Heart left ventricle (tissue), 16 donors: ENCODE measurements at regions of chr6 and their contacts with region 1.

Region 1: GRCh38 chr6:53199156-53199555 is 50.5 kb upstream of the GCM1 start:
- DNase-seq: no peak
- ATAC-seq: no peak
- H3K4me3 ChIP-seq: no peak overlapping the region
- H3K27ac ChIP-seq: no peak overlapping the region
- H3K4me1 ChIP-seq: no peaks in the 10 kb centered on the region
- H3K27me3 ChIP-seq: no peaks in the 10 kb centered on the region
- CTCF ChIP-seq: no peak
- POLR2A ChIP-seq: no peak

Region 2: DNA sequence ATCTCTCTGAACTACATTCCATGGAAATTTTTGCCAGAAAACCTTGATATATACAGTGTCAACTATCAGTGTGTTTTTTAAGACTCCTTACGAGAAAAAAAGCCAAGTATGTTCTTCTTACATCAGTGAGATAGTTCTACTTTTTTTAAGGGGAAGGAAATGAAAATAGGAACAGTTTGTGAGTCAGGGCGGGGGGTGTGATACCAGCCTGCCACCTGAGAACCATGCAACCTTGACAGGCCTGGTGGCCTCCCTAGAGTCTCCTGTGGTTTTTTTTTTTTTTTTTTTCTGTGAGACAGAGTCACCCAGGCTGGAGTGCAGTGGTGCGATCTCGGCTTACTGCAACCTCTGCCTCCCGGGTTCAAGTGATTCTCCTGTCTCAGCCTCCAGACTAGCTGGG is 45.8 kb after region 1 on chr6:
- intact Hi-C with region 1: loop called in 1 of 10 experiments (anchors 5 kb)
- DNase-seq: no peak
- ATAC-seq: peak in 3 of 4 donors; percentile 20 to 66 (median 34)
- H3K4me3 ChIP-seq: no peak overlapping the region
- H3K27ac ChIP-seq: peak overlapping the region in 1 of 12 donors; percentile 71
- H3K4me1 ChIP-seq: peaks cover 0 to 23% (median 0%) of the 10 kb centered on the region in 12 donors
- H3K27me3 ChIP-seq: no peaks in the 10 kb centered on the region
- CTCF ChIP-seq: no peak
- POLR2A ChIP-seq: no peak

Region 3: GRCh38 chr6:53326372-53327016 is 127.3 kb after region 1 on chr6:
- intact Hi-C with region 1: no loop called
- DNase-seq: peak in 4 of 5 donors; percentile 37 to 60 (median 44)
- ATAC-seq: peak; percentile 61 to 91 (median 84)
- H3K4me3 ChIP-seq: no peak overlapping the region
- H3K27ac ChIP-seq: peak overlapping the region in 11 of 12 donors; percentile 29 to 82 (median 63)
- H3K4me1 ChIP-seq: peaks cover 0 to 63% (median 45%) of the 10 kb centered on the region in 12 donors
- H3K27me3 ChIP-seq: no peaks in the 10 kb centered on the region
- CTCF ChIP-seq: no peak
- POLR2A ChIP-seq: no peak